HEK293 (cell line): ENCODE measurements at regions of chr2 and their contacts with region 1.

Region 1: DNA sequence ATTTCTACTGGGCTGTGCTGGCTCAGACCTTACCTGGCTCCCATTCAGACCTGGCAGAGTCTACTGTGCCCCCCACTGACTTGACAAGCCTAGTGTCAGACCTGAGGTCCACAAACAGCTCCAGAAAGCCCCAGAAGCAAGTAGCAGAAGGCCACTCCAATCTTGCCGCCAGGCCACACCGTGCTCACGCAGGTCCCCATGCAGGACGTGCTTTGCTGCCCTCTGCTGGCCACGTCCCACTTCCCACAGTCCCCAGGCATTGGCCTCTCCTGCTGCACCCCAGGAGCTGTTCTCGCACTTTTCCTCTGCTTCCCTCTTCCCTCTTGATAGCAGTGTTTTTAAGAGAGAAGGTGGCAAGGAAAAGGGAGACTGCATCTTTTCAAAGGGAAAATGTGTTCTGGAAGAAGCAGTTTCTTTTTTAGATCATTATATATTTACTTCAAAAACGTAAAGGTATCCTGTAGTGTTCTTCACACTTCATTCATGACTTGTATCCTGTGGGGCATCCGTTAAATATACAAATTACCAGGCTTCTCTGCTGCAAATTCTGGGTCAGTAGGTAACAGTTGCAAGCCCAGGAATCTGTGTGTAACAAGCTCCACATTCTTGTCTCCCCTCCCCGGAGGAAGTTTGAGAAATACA is 81.4 kb upstream of the PAPOLG start:
- H3K4me3 ChIP-seq: no peak overlapping the region
- H3K27ac ChIP-seq: no peak overlapping the region
- H3K4me1 ChIP-seq: no peaks in the 10 kb centered on the region
- CTCF ChIP-seq: peak; percentile 93

Region 2: DNA sequence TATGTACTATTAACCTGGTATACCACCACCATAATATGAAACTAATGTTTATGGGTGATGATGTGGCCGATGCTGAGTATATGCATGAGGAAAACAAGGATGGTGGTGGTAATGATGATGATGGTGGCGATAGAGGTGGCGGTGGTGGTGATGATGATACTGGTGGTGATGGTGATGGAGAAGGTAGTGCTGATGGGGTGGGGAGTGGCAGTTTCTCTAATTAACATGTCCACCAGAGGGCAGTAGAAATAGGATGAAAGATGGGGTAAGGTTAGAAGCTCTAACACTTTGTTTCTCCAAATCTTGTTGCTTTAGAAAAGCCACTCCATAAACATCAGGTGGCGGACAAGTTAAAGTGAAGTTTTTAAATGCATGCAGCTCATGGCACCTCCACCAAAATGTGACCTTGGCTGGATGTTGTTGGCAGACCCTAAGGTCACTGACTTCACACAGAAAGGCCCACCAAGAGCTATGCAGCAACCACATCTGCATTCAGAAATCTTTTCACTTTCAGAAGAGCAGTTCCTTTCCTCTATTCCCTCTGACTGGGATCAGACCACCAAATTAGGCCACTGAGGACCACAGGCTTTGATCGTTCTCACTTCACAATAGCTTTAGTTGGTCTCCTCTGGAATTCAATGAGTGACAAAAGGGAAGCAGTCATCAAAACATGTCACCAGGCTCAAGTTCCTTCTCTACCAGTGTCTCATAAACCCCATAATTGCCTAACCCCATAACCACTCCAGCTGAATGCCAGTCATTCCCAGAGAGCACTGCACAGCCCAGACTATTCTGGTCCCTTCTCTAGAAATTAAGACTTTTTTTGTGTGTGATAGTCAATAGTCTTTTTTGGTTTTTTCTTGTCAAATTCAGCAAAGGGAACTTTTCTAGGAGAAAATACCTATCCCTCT is 113.7 kb before region 1 on chr2:
- CTCF ChIA-PET with region 1: interaction called, 31 read pairs
- POLR2A ChIA-PET with region 1: no interaction called
- H3K4me3 ChIP-seq: no peak overlapping the region
- H3K27ac ChIP-seq: no peak overlapping the region
- H3K4me1 ChIP-seq: peaks cover 29% of the 10 kb centered on the region
- CTCF ChIP-seq: peak; percentile 77

Region 3: GRCh38 chr2:60581433-60582282 is 93.0 kb before region 1 on chr2:
- CTCF ChIA-PET with region 1: interaction called, 16 read pairs
- POLR2A ChIA-PET with region 1: no interaction called
- H3K4me3 ChIP-seq: peak overlapping the region; percentile 31
- H3K27ac ChIP-seq: peak overlapping the region; percentile 48; the same call in 1 of the 2 replicates
- H3K4me1 ChIP-seq: peaks cover 6% of the 10 kb centered on the region
- CTCF ChIP-seq: peak; percentile 92

Region 4: GRCh38 chr2:60659026-60659425 is 15.6 kb before region 1 on chr2:
- CTCF ChIA-PET with region 1: interaction called, 11 read pairs
- POLR2A ChIA-PET with region 1: no interaction called
- H3K4me3 ChIP-seq: no peak overlapping the region
- H3K27ac ChIP-seq: no peak overlapping the region
- H3K4me1 ChIP-seq: no peaks in the 10 kb centered on the region
- CTCF ChIP-seq: no peak

Region 5: GRCh38 chr2:60693551-60693950 is 18.9 kb after region 1 on chr2:
- CTCF ChIA-PET with region 1: interaction called, 14 read pairs
- POLR2A ChIA-PET with region 1: no interaction called
- H3K4me3 ChIP-seq: no peak overlapping the region
- H3K27ac ChIP-seq: no peak overlapping the region
- H3K4me1 ChIP-seq: no peaks in the 10 kb centered on the region
- CTCF ChIP-seq: no peak

Region 6: DNA sequence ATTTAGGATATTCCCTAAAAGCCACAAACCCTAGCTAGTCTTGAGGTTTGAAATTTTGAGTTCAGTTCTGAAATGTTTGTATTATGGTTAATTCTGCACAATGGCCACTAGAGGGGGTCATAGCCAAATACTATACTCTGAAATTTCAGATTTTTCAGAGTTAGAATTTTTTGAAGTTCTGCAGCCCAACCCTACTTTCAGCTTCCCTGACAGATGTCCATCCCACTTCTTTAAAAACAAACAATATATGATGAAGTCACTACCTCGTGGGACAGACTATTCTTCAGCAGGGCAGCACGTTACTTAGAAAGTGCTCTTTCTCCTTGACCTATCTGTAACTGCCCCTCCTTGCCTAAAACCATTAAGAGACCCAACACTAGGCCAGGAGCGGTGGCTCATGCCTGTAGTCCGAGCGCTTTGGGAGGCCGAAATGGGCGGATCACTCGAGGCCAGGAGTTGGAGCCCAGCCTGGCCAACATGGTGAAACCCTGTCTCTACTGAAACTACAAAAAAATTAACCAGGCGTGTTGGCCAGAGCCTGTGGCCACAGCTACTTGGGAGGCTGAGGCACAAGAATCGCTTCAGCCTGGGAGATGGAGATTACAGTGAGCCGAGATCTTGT is 33.2 kb after region 1 on chr2:
- CTCF ChIA-PET with region 1: interaction called, 11 read pairs
- POLR2A ChIA-PET with region 1: no interaction called
- H3K4me3 ChIP-seq: no peak overlapping the region
- H3K27ac ChIP-seq: no peak overlapping the region
- H3K4me1 ChIP-seq: no peaks in the 10 kb centered on the region
- CTCF ChIP-seq: no peak